Activated T-helper 2 cell treated with anti-CD3 and anti-CD28 coated beads, Interferon-gamma antibody, Interleukin-2, Interleukin-4, amounts not matched to agents 10 μg/mL and 5 μg/mL and 100 μg/mL, durations not matched to agents 14 hours and 24 hours and 36 hours (primary cell): ENCODE measurements at regions of chr12 and their contacts with region 1.

Region 1: DNA sequence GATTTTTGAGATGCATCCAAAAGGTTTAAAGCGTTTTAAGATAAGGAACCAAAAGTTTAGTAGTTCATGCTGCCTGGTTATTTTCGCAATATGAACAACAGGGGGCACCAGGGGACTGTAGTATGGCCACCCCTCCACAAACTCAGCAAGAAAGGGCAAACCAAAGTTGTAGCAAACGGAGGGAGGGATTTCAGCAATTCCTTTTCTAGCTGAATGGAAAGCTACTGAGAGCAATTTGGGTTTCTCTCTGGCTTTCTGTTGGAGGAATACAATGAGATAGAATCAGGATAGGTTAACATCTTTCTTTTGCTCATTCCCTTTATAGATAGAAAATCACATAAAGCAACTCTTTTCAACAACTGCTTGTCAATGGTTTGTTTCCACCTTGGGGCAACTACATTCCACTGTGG is 62.5 kb downstream of the DRAM1 start:
- DNase-seq: peak; percentile 49
- H3K4me3 Mint-ChIP-seq: no peak overlapping the region
- H3K27ac Mint-ChIP-seq: no peak overlapping the region
- H3K4me1 Mint-ChIP-seq: peaks cover 40% of the 10 kb centered on the region
- H3K27me3 Mint-ChIP-seq: peaks cover 2% of the 10 kb centered on the region

Region 2: DNA sequence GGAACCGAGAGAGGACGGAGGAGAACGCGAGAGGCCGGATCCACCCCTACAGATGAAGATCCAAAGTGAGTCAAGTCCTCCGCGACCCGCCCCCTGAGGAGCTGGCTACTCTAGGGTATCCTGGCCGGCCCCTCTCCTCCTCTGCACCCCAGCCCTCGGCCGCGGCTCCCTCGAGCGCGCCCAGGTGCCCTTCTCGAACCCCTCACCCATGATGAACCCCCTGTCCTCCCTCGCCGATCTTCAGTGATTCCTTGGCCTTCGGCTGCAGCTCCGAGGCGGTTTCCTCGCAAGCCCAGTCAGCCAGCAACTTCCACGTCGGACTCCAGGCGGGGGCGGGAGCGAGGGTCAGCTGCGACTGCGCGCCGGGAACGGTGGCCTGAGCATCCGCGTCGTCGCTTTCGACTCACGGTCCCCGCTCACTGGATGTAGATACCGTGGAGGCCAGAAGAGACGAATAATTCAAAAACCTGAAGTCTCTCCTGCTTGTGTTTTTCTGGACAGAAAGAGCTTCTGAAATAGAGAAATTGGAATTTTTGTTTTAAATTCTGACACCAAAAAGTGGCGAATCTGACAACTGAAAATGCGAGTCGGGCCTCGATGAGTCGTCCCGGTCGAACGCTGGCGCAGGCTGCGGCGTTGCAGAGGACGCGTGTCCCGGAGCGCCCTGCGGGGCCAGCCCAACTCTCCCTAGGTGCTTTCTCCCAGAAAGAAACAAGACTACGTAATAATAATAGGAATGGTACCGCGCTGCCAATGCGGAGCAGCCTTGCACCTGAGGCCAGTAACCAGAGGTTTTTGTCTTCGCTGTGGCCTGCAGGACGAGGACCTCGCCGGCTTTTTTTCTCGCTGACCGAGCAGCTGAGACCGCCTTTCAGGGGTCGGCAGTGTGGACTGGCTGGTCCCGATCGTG is 532.2 kb before region 1 on chr12 and contains the start of gene ARL1:
- intact Hi-C with region 1: loop called (anchors 10 kb)
- DNase-seq: peak; percentile 65
- H3K4me3 Mint-ChIP-seq: peak within 1 kb of the TSS; percentile 95
- H3K27ac Mint-ChIP-seq: peak within 1 kb of the TSS; percentile 91
- H3K4me1 Mint-ChIP-seq: peaks cover 11% of the 10 kb centered on the region
- H3K27me3 Mint-ChIP-seq: peaks cover 10% of the 10 kb centered on the region
- total RNA-seq, gene ARL1: 74.2 and 77.5 TPM in 2 replicates

Region 3: GRCh38 chr12:102061560-102062418 is 121.9 kb after region 1 on chr12 and contains the start of gene WASHC3:
- intact Hi-C with region 1: loop called (anchors 2 kb)
- DNase-seq: peak; percentile 95
- H3K4me3 Mint-ChIP-seq: peak within 1 kb of the TSS; percentile 92
- H3K27ac Mint-ChIP-seq: peak within 1 kb of the TSS; percentile 99
- H3K4me1 Mint-ChIP-seq: peaks cover 38% of the 10 kb centered on the region
- H3K27me3 Mint-ChIP-seq: no peaks in the 10 kb centered on the region
- total RNA-seq, gene WASHC3: 34.0 and 39.0 TPM in 2 replicates

Region 4: GRCh38 chr12:102095675-102096263 is 155.9 kb after region 1 on chr12:
- intact Hi-C with region 1: no loop called
- DNase-seq: no peak
- H3K4me3 Mint-ChIP-seq: no peak overlapping the region
- H3K27ac Mint-ChIP-seq: no peak overlapping the region
- H3K4me1 Mint-ChIP-seq: peaks cover 18% of the 10 kb centered on the region
- H3K27me3 Mint-ChIP-seq: no peaks in the 10 kb centered on the region

Region 5: GRCh38 chr12:102197789-102198188 is 257.9 kb after region 1 on chr12 and contains the start of gene PMCH:
- intact Hi-C with region 1: loop called (anchors 10 kb)
- DNase-seq: no peak
- H3K4me3 Mint-ChIP-seq: peak within 1 kb of the TSS; percentile 63
- H3K27ac Mint-ChIP-seq: peak within 1 kb of the TSS; percentile 73
- H3K4me1 Mint-ChIP-seq: peaks cover 38% of the 10 kb centered on the region
- H3K27me3 Mint-ChIP-seq: no peaks in the 10 kb centered on the region
- total RNA-seq, gene PMCH: 210 and 221 TPM in 2 replicates

Region 6: DNA sequence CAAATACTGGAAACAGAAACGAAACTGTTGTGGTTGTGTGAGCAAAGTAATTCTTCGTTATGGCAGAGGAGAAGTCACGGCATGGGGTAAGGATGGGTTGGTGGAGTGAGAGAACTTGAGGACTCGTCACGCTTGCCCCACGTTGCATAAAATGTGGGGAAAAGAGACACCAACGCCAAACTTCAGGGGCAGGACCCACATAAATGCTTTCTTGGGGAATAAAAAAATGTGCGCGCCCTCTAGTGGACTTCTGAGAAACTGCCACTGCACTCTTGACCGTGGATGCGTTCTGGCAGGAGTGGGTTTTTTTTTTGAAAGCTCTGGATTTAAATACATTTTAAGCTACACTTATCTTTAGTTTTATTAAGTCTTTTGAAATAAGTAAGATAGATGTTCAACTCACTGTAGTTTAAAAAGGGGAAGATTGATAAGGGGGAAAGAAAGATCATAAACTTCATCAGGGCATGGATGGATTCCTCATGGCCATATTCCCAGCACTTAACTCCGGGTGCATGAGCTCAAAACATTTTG is 544.6 kb after region 1 on chr12:
- intact Hi-C with region 1: loop called (anchors 1 kb)
- DNase-seq: peak; percentile 53
- H3K4me3 Mint-ChIP-seq: peak overlapping the region; percentile 71
- H3K27ac Mint-ChIP-seq: peak overlapping the region; percentile 96
- H3K4me1 Mint-ChIP-seq: peaks cover 36% of the 10 kb centered on the region
- H3K27me3 Mint-ChIP-seq: no peaks in the 10 kb centered on the region

Region 7: DNA sequence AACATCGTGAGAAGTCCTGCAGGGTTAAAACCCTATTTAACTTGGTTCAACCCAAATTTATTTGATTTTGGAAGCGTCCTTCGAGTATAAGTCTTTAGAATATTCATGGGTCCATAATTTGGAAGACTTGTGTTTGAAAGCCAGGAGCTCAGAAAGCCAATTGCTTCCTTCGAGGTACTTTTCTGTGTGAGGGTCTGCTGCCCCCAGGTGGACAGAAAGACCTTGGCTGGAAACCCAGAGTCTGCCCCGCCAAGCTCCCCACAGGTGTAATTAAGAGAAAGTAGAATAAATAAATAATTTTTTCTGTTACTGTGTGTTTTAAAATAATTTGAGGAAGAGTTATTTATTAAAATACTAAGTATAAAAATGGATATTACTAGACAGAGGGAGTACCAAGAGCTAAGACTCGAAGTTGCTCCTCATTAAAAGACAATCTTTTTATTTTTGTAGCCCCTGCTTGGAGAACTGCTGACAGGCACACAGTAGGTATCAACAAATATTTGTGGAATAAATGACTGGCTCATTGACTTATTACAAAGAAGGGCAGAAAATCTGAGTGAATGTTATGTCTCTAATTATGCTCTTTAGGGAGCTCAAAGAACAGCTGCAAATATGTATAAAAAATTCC is 871.4 kb after region 1 on chr12:
- intact Hi-C with region 1: loop called (anchors 5 kb)
- DNase-seq: no peak
- H3K4me3 Mint-ChIP-seq: no peak overlapping the region
- H3K27ac Mint-ChIP-seq: no peak overlapping the region
- H3K4me1 Mint-ChIP-seq: no peaks in the 10 kb centered on the region
- H3K27me3 Mint-ChIP-seq: peaks cover 6% of the 10 kb centered on the region